Activated naive CD8-positive, alpha-beta T cell treated with anti-CD3 and anti-CD28 coated beads, Interleukin-2, amount 10 ng/mL, durations not matched to agents 7 days and 5 days (primary cell): ENCODE measurements at regions of chr12 and their contacts with region 1.

Region 1: DNA sequence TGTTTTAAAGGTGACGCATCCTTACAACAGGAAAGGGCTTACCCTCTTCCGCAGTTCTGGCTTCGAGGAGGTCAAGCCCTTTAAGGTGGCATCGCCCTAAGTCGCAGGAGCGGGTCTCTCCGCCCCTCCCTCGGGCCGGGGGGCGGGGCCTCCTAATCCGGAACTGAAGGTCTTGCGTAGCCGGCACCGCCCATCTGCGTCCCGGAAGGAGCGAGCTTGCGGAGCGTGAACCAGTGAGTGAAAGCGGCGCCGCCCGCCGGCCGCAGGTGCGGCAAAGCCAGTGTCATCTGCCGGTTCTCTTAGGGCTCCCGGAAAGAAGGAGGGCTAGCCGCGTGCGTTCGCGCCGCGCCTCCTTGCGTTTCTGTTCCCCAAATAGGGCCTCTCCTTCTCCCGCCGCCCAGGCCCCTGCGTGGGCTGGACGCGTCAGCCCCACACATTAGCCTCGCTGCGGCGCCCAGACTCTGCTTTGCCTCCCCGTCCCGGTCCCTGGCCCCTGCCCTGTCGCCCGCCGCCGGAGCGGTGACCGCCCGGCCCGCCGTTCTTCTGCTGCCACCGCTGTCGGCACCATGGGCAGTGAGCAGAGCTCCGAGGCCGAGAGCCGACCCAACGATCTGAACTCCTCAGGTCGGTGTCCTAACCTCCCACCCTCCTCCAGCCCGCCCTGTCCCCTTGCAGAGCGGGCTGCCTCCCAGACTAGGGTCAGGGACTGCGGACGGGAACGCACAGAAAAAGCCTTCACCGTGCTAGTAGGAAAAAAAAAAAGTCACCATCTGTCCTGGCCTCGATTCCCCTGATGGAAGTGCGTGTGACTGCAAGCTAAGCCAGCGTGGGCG is at the start of gene BORCS5:
- DNase-seq: peak; percentile 99
- ATAC-seq: peak; percentile 88
- H3K4me3 Mint-ChIP-seq: peak within 1 kb of the TSS; percentile 92
- H3K27ac Mint-ChIP-seq: peak within 1 kb of the TSS; percentile 97
- H3K4me1 Mint-ChIP-seq: peaks cover 42% of the 10 kb centered on the region
- H3K27me3 Mint-ChIP-seq: no peaks in the 10 kb centered on the region
- total RNA-seq, gene BORCS5: 20.1 to 21.8 TPM

Region 2: GRCh38 chr12:12338527-12339168 is 18.5 kb before region 1 on chr12:
- POLR2A ChIA-PET with region 1: interaction called, 10 read pairs
- DNase-seq: no peak
- ATAC-seq: no peak
- H3K4me3 Mint-ChIP-seq: peak overlapping the region; percentile 35
- H3K27ac Mint-ChIP-seq: peak overlapping the region; percentile 48
- H3K4me1 Mint-ChIP-seq: peaks cover 15% of the 10 kb centered on the region
- H3K27me3 Mint-ChIP-seq: peaks cover 2% of the 10 kb centered on the region

Region 3: DNA sequence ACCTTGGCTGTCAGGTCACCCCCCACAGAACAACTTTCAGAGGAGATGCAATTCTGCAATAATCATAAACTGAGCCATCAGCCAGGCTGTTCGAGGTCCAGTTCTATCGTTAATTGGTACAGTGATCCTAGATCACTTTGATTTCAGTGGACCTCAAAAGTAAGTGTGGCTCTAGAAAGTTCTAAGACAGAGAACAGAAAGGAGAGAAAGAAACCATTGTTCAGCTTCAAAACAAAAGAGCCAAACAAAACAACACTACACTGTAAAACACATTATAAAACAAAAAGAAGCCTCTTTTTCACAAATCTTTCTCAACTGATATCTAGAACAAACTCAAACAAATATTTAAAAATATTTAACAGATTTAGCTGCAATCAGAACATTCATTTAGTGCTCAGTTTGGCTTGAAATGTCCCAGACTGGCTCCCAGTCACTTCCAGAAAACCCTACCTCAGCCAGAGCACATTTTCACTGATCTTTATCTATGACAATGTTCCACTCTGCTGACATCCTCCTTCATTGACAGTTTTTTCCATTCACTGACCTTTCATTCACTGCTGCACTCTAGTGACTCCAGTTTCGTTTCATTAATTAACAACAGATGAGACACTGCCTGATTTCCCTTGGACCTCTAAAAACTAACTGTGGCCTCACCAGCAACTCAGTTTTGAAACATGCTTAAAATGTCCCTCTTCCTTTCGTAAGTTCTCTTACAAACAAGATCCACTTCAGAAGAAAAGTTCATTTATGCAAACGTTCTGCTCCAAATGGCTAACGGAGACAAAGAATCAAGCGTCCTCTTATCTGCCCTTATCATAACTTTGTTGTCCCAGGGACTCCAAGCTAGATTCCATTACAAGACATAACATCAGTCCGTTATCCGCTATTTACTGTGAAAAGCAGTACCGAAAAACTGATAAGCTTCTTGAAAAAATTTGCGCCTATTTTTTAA is 148.7 kb after region 1 on chr12:
- POLR2A ChIA-PET with region 1: no interaction called
- DNase-seq: no peak
- ATAC-seq: peak; percentile 66
- H3K4me3 Mint-ChIP-seq: peak overlapping the region; percentile 10
- H3K27ac Mint-ChIP-seq: no peak overlapping the region
- H3K4me1 Mint-ChIP-seq: peaks cover 17% of the 10 kb centered on the region
- H3K27me3 Mint-ChIP-seq: no peaks in the 10 kb centered on the region

Region 4: DNA sequence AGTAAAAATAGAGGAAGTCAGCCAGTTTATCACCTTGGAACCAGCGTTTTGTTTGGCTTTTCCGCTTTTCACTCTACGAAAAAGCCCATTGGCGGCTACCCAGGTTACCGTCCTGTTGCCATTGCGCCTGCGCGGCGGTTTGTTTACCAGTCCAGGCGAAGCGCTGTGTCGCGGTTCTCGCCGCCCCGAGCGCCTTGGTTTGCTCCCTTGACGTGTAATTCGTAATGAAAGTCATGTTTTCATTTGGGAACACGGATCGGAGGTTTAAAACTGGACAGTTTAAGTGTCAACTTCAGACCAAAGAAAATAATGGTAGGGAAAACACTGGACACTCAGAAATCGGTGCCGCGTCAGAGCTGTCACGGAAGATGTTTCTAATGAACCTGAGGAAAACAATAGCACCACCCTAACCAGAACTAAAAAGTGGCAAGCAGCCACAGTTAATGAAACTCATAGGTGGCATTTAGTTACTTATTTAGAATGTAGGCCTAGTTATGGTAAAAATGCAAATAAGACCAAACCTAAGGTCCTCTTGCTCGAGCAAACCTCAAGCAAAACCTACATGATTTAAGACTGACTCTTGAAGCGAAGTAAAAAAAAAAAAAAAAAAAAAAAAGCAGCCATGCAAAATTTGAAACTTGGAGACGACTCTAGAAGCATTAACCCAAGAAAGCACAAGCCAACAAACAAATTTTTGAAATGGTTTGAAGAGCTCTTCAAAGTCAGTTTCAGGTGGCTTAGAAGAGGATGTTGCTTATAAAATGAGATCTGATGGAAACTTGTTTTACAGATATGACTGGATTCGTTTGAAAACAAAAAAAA is 339.7 kb after region 1 on chr12:
- POLR2A ChIA-PET with region 1: interaction called, 28 read pairs
- DNase-seq: peak; percentile 93
- ATAC-seq: peak; percentile 86
- H3K4me3 Mint-ChIP-seq: peak overlapping the region; percentile 95
- H3K27ac Mint-ChIP-seq: peak overlapping the region; percentile 99
- H3K4me1 Mint-ChIP-seq: peaks cover 41% of the 10 kb centered on the region
- H3K27me3 Mint-ChIP-seq: no peaks in the 10 kb centered on the region

Region 5: DNA sequence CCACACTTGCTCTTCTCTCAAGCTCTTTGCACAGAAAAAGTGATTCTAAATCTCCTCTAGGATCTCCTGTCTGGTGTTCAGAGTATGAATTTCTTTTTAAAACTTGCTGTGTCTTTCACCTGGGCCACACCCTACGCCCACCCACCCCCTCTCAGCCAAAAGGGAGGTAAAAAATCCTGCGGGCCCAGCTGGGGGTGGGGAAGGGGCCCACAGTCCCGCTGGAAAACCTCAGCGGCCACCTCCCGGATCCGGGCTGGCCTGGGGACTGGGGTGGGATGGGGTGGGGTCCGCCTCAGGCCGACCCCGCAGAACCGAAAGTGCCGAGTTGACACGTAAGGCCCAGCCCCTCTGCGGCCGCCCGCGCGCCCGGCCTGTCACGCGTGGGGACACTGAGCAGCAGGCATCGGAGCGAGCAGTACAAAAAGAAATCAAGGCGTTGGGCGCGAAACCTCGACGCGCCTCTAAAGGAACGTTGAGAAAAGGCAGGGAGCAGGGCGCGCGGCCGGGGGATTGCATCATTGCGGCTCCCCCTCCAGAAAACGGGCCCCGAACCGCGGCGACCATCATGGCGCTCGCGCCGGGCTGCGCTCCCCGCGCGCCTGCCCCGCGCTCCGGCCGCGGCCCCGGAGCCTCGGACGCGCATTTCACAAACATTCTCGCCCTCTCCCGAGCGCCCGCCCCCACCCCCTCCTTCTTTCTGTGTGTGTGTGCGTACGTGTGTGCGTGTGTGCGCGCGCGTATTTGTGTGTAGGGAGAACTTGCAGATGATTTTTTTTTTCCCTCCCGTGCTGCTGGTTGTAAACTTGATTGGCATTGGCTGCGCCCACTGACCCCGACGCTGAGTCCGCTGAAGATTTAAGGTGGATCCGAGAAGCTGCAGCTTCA is 367.8 kb after region 1 on chr12:
- POLR2A ChIA-PET with region 1: interaction called, 86 read pairs
- DNase-seq: peak; percentile 89
- ATAC-seq: peak; percentile 51
- H3K4me3 Mint-ChIP-seq: peak overlapping the region; percentile 85
- H3K27ac Mint-ChIP-seq: peak overlapping the region; percentile 94
- H3K4me1 Mint-ChIP-seq: peaks cover 30% of the 10 kb centered on the region
- H3K27me3 Mint-ChIP-seq: no peaks in the 10 kb centered on the region